ENCODE measurements at regions of chr10 and their contacts with region 1.

Region 1: GRCh38 chr10:31875608-31876007 is 53.0 kb downstream of the ARHGAP12 start:
- DNase-seq: peak; percentile 21
- ATAC-seq: peak; percentile 93
- H3K4me3 ChIP-seq: no peak overlapping the region
- H3K27ac ChIP-seq: no peak overlapping the region
- H3K4me1 ChIP-seq: peaks cover 6% of the 10 kb centered on the region
- H3K27me3 ChIP-seq: no peaks in the 10 kb centered on the region
- CTCF ChIP-seq: no peak
- EP300 ChIP-seq: no peak
- POLR2A ChIP-seq: no peak
- RAD21 ChIP-seq: no peak

Region 2: GRCh38 chr10:31590023-31590800 is 285.4 kb before region 1 on chr10:
- CTCF ChIA-PET with region 1: no interaction called
- POLR2A ChIA-PET with region 1: no interaction called
- RAD21 ChIA-PET with region 1: no interaction called
- SMC1A ChIA-PET with region 1: no interaction called
- in situ Hi-C with region 1: no loop called
- intact Hi-C with region 1: no loop called
- DNase-seq: no peak
- ATAC-seq: no peak; the same call in 2 of the 3 replicates
- H3K4me3 ChIP-seq: no peak overlapping the region
- H3K27ac ChIP-seq: no peak overlapping the region
- H3K4me1 ChIP-seq: no peaks in the 10 kb centered on the region; the same call in 1 of the 2 replicates
- H3K27me3 ChIP-seq: no peaks in the 10 kb centered on the region
- CTCF ChIP-seq: no peak
- EP300 ChIP-seq: no peak
- POLR2A ChIP-seq: no peak
- RAD21 ChIP-seq: no peak

Region 3: GRCh38 chr10:31921031-31921430 is 45.4 kb after region 1 on chr10:
- CTCF ChIA-PET with region 1: interaction called, 3 read pairs
- POLR2A ChIA-PET with region 1: interaction called, 3 read pairs
- RAD21 ChIA-PET with region 1: no interaction called
- SMC1A ChIA-PET with region 1: interaction called, 17 read pairs
- in situ Hi-C with region 1: no loop called
- intact Hi-C with region 1: loop called (anchors 5 kb)
- DNase-seq: peak; percentile 51
- ATAC-seq: peak; percentile 72
- H3K4me3 ChIP-seq: peak overlapping the region; percentile 17
- H3K27ac ChIP-seq: peak overlapping the region; percentile 58
- H3K4me1 ChIP-seq: peaks cover 38% of the 10 kb centered on the region
- H3K27me3 ChIP-seq: no peaks in the 10 kb centered on the region
- CTCF ChIP-seq: no peak
- EP300 ChIP-seq: no peak
- POLR2A ChIP-seq: no peak
- RAD21 ChIP-seq: no peak

Region 4: GRCh38 chr10:31928549-31929260 is 53.1 kb after region 1 on chr10 and contains the start of gene ARHGAP12:
- CTCF ChIA-PET with region 1: no interaction called
- POLR2A ChIA-PET with region 1: interaction called, 7 read pairs
- RAD21 ChIA-PET with region 1: interaction called, 4 read pairs
- SMC1A ChIA-PET with region 1: interaction called, 17 read pairs
- in situ Hi-C with region 1: no loop called
- intact Hi-C with region 1: loop called (anchors 5 kb)
- DNase-seq: no peak
- ATAC-seq: peak; percentile 84
- H3K4me3 ChIP-seq: peak within 1 kb of the TSS; percentile 70
- H3K27ac ChIP-seq: peak within 1 kb of the TSS; percentile 53
- H3K4me1 ChIP-seq: peaks cover 14% of the 10 kb centered on the region
- H3K27me3 ChIP-seq: no peaks in the 10 kb centered on the region
- CTCF ChIP-seq: no peak
- EP300 ChIP-seq: no peak
- POLR2A ChIP-seq: peak; percentile 89
- RAD21 ChIP-seq: no peak
- polyA plus RNA-seq, gene ARHGAP12: 5.4 to 7.7 TPM

Region 5: DNA sequence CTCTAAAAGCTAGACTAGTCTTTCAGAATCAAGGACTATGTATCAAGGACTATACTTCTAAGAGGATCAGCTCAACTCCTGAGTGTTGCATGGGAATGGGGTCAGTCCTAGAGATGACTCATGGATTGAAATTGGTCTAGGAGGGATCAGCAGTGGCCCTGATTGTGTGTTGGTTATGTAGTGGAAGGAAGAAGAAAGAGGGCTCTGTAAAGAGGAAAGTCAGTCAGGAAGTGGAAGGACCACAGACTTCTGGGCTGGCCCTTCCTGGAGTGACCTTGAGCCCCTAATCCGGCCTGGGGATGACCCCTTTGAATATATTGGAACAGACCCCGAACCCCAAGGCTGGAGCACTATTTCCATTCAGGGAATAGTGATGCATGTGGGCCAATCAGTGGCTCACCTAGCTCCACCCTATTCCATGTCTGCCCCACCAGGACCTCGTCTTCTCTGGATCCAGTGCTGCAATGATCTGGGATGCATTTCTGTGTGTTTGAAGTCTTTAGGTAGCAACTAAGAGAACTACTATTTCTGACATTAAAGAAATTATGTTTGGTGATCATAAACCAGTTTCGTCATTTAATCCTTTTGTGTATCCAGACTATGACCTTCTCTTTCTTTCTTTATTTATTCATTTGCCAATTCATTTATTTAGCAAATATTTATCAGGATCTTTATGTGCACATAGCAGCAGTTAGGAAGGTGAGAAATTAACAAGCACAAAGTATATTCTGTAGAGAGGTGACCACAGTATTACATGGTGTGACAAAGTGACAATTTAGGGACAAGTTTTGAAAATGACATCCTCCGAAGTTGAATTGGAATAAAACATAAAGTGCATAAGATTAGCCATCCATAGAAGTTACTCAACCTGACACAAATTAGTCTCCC is 229.3 kb after region 1 on chr10:
- CTCF ChIA-PET with region 1: no interaction called
- POLR2A ChIA-PET with region 1: no interaction called
- RAD21 ChIA-PET with region 1: no interaction called
- SMC1A ChIA-PET with region 1: no interaction called
- in situ Hi-C with region 1: no loop called
- intact Hi-C with region 1: no loop called
- DNase-seq: no peak
- ATAC-seq: no peak
- H3K4me3 ChIP-seq: no peak overlapping the region
- H3K27ac ChIP-seq: no peak overlapping the region
- H3K4me1 ChIP-seq: no peaks in the 10 kb centered on the region
- H3K27me3 ChIP-seq: no peaks in the 10 kb centered on the region
- CTCF ChIP-seq: no peak
- EP300 ChIP-seq: no peak
- POLR2A ChIP-seq: no peak
- RAD21 ChIP-seq: no peak

Measured in GM12878 (cell line).